Activated CD4-positive, alpha-beta memory T cell treated with anti-CD3 and anti-CD28 coated beads, Interleukin-2, amount 10 ng/mL, durations not matched to agents 7 days and 5 days (primary cell): ENCODE measurements at regions of chr17 and their contacts with region 1.

Region 1: GRCh38 chr17:43360739-43361505 is 37.9 kb upstream of the ARL4D start:
- DNase-seq: peak; percentile 94
- H3K4me3 Mint-ChIP-seq: peak overlapping the region; percentile 85
- H3K27ac Mint-ChIP-seq: peak overlapping the region; percentile 99
- H3K4me1 Mint-ChIP-seq: peaks cover 41% of the 10 kb centered on the region
- H3K27me3 Mint-ChIP-seq: peaks cover 3% of the 10 kb centered on the region

Region 2: DNA sequence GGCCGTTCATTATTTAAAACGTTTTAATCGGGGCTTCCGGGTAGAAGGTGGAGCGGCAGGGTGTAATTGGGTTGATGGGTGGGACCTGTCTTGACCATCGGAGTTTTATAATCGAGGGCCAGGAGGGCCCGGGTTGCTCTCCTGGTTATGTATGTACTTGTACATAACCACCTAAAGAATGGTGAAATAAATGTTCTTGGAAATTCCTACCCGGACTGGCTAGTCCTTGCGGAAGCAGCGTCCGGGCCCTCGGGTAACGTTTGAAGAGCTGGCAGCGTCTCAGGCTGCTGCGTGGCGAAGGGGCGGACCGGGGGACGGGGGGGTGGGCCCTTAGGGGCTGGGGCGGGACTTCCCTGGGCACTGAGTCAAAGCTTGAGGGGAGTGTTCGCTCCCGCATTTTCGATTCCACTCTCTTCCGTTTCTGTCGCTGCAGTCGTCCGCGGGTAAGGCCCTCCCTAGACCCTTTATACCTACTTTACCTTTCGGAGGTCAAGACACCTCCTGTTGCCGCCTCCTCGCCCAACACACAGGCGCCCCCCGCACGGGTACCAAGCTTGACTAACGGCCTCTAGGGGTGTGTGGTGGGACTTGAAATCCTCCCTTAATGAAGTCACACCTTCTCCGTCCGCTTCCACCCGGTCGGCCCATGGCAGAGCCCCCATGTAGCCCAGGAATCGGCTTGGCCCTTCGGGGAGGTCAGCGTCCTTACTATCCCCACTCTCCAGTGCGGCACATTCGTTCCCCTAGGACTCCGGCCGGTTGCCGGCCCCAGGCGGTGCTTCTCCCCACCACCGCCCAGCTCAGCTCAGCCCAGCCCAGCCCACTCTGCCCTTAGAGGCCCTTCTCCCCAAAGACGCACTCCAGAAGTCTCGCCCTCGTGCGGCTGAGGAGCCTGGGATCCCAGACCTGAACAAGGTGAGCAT is 149.2 kb before region 1 on chr17 and contains the start of gene TMEM106A:
- CTCF ChIA-PET with region 1: no interaction called
- POLR2A ChIA-PET with region 1: interaction called, 31 read pairs
- DNase-seq: peak; percentile 80
- H3K4me3 Mint-ChIP-seq: peak within 1 kb of the TSS; percentile 81
- H3K27ac Mint-ChIP-seq: peak within 1 kb of the TSS; percentile 82
- H3K4me1 Mint-ChIP-seq: peaks cover 31% of the 10 kb centered on the region
- H3K27me3 Mint-ChIP-seq: no peaks in the 10 kb centered on the region
- total RNA-seq, gene TMEM106A: 12.9 to 13.8 TPM

Region 3: DNA sequence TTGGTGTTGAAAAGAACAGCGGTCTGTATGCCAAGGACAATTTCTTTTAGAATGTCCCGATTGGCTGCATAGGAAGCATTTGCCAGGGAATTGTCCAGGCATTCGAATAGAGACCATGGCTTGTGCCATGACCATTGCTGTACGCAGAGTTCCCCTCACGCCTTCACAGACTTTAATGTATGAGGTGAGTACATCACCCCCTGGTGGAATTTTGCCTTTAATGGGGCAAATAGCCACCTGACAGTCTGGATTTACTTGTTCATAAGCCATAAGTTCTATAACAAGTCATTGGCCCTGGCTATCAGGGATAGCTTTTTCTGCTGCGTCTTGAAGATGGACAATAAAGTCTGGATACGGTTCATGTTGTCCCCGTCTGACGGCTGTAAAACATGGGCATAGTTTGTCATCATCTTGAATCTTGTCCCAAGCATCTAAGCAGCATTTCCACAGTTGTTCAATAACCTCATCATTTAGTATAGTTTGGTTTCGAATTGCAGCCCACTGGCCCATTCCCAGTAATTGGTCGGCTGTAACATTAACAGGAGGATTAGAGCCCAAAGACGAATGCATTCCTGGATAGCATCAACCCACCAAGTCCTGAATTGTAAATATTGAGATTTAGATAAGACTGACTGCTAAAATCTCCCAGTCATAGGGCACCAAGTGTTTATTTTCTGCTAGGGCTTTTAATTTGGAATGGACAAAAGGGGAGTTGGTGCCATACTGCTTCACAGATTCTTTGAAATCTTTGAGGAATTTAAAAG is 29.9 kb before region 1 on chr17:
- CTCF ChIA-PET with region 1: interaction called, 3 read pairs
- POLR2A ChIA-PET with region 1: interaction called, 33 read pairs
- DNase-seq: no peak
- H3K4me3 Mint-ChIP-seq: no peak overlapping the region
- H3K27ac Mint-ChIP-seq: no peak overlapping the region
- H3K4me1 Mint-ChIP-seq: peaks cover 7% of the 10 kb centered on the region
- H3K27me3 Mint-ChIP-seq: peaks cover 32% of the 10 kb centered on the region

Region 4: GRCh38 chr17:43388359-43389045 is 27.6 kb after region 1 on chr17:
- CTCF ChIA-PET with region 1: interaction called, 16 read pairs
- POLR2A ChIA-PET with region 1: interaction called, 903 read pairs
- DNase-seq: peak; percentile 93
- H3K4me3 Mint-ChIP-seq: peak overlapping the region; percentile 85
- H3K27ac Mint-ChIP-seq: peak overlapping the region; percentile 98
- H3K4me1 Mint-ChIP-seq: peaks cover 18% of the 10 kb centered on the region
- H3K27me3 Mint-ChIP-seq: no peaks in the 10 kb centered on the region

Region 5: DNA sequence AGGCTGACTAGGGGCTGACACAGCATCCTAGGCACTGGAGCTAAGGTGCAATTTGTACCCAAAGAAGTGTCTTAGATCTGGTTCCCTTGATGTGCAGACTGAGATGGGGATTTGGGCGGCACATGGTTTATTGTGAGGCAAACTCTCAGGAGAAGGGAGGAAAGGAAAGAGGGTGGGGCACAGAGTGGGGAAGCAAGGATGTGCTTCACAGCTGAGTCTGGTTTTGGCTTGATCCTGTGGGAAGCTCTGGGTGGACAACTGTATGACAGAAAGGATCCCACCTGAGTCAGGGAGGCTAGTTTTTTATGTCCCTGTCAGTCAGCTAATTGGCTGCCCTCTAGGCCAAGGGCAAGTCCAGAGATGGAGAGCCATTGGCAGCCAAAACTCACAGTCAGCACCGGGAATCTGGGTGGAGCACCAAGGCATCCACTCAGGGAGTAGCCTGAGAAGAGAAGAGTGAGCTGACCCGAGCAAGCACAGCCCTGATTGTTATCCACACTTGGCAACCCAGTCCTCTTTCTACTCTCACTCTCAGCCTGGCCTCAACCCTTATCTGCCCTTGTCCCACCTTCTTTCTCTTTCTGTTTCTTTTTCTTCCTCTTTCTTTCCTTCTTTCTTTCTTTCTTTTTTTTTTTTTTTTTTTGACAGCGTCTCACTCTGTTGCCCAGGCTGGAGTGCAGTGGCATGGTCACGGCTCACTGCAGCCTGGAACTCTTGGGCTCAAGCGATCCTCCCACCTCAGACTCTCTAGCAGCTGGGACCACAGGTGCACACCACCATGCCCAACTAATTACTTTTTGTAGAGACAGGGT is 49.8 kb after region 1 on chr17:
- CTCF ChIA-PET with region 1: no interaction called
- POLR2A ChIA-PET with region 1: no interaction called
- DNase-seq: no peak
- H3K4me3 Mint-ChIP-seq: no peak overlapping the region
- H3K27ac Mint-ChIP-seq: no peak overlapping the region
- H3K4me1 Mint-ChIP-seq: peaks cover 4% of the 10 kb centered on the region
- H3K27me3 Mint-ChIP-seq: peaks cover 25% of the 10 kb centered on the region

Region 6: GRCh38 chr17:43483674-43484372 is 122.9 kb after region 1 on chr17 and contains the start of gene DHX8:
- CTCF ChIA-PET with region 1: interaction called, 23 read pairs
- POLR2A ChIA-PET with region 1: interaction called, 118 read pairs
- DNase-seq: peak; percentile 99
- H3K4me3 Mint-ChIP-seq: peak within 1 kb of the TSS; percentile 100
- H3K27ac Mint-ChIP-seq: peak within 1 kb of the TSS; percentile 98
- H3K4me1 Mint-ChIP-seq: peaks cover 26% of the 10 kb centered on the region
- H3K27me3 Mint-ChIP-seq: no peaks in the 10 kb centered on the region
- total RNA-seq, gene DHX8: 59.8 to 61.3 TPM